ENCODE measurements at regions of chr2 and their contacts with region 1.

Region 1: DNA sequence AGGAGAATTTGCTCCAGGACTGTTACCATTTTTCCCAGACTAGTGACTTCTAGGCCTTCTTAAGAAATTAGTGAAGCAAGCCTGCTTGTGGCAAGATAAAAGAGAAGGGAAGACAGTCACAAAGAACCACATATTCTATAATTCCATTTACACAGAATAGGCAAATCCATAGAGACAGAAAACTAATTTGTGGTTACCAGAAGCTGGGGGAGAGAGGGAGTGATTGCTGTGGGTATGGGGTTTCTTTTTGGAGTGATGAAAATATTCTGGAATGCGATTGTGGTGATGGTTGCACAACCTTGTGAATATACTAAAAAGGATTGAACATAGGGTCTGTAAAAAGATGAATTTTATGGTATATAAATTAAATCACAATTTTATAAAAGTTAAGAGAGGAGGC is 37.5 kb upstream of the SIX2 start:
- DNase-seq: no peak
- ATAC-seq: no peak
- H3K4me3 ChIP-seq: no peak overlapping the region
- H3K27ac ChIP-seq: no peak overlapping the region
- H3K4me1 ChIP-seq: no peaks in the 10 kb centered on the region
- H3K27me3 ChIP-seq: peaks cover 16% of the 10 kb centered on the region
- CTCF ChIP-seq: no peak

Region 2: GRCh38 chr2:45518546-45518945 is 471.8 kb after region 1 on chr2:
- CTCF ChIA-PET with region 1: interaction called, 12 read pairs
- POLR2A ChIA-PET with region 1: no interaction called
- in situ Hi-C with region 1: no loop called
- intact Hi-C with region 1: no loop called
- DNase-seq: no peak
- ATAC-seq: no peak
- H3K4me3 ChIP-seq: no peak overlapping the region
- H3K27ac ChIP-seq: no peak overlapping the region
- H3K4me1 ChIP-seq: no peaks in the 10 kb centered on the region
- H3K27me3 ChIP-seq: no peaks in the 10 kb centered on the region
- CTCF ChIP-seq: no peak